H1 (cell line): ENCODE measurements at regions of chr4 and their contacts with region 1.

Region 1: DNA sequence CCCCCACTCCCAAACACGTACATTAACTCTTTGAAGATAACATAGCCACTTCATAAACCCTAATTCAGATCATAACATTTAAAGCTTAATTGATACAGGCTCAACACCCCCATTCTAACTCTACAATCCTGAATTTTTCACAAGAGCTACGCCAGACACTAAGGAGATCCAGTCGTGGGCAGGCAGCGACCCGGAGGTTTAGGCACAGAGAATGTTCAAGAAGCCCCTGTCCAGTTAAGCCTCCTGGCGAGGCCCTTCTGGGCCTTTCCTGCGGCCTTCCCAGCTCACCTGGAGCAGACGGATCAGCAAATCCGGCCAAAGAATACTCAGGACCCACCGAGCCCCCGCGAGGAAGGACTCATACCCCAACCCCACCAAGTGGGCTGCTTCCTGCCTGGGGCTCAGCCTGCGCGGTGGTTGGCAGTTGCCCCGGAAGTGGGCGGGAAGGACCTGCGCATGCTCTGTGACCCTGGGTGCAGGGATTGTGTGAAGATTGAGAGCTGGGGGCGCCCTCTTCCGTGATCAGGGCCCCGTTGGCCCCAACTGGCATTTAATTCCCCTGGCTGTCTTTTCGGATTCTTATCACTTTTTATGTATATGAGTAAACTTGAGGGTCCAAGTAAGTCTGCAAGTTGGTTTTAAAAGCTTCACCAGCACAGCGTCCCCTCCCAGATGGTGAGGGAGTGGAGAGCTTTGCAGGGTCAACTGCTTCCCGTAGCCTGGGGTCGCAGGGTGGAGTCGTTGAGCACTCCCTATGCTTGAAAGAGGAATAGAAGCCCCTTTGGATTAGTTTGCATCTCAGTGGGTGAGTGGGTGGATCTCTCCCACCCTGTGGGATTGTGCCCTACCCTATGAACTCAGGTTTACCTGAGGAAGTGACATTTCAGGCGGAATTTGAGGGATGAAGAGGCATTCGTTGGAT is at the start of gene TRIM61:
- DNase-seq: peak in 1 of 2 experiments; percentile 83
- H3K4me3 ChIP-seq: peak within 1 kb of the TSS in 2 of 4 experiments; percentile 28 to 72; a peak in 3 of 8 replicates
- H3K27ac ChIP-seq: no peak within 1 kb of the TSS
- H3K4me1 ChIP-seq: no peaks in the 10 kb centered on the region
- H3K27me3 ChIP-seq: no peaks in the 10 kb centered on the region
- CTCF ChIP-seq: no peak
- EP300 ChIP-seq: no peak
- POLR2A ChIP-seq: no peak
- RAD21 ChIP-seq: no peak
- total RNA-seq, gene TRIM61: 4.1 and 5.0 TPM in 2 replicates

Region 2: GRCh38 chr4:164949448-164950143 is 27.9 kb before region 1 on chr4:
- CTCF ChIA-PET with region 1: interaction called, 19 read pairs
- POLR2A ChIA-PET with region 1: no interaction called
- DNase-seq: peak in 1 of 2 experiments; percentile 80
- H3K4me3 ChIP-seq: no peak overlapping the region
- H3K27ac ChIP-seq: no peak overlapping the region; the same call in 1 of the 2 replicates
- H3K4me1 ChIP-seq: no peaks in the 10 kb centered on the region
- H3K27me3 ChIP-seq: no peaks in the 10 kb centered on the region
- CTCF ChIP-seq: peak; percentile 59 to 76 (median 62)
- EP300 ChIP-seq: no peak
- POLR2A ChIP-seq: no peak
- RAD21 ChIP-seq: peak; percentile 57 to 66

Region 3: GRCh38 chr4:164956766-164957643 is 20.5 kb before region 1 on chr4:
- CTCF ChIA-PET with region 1: interaction called, 10 read pairs
- POLR2A ChIA-PET with region 1: no interaction called
- DNase-seq: peak; percentile 54 to 69
- H3K4me3 ChIP-seq: peak overlapping the region; percentile 64 to 76 (median 72)
- H3K27ac ChIP-seq: no peak overlapping the region
- H3K4me1 ChIP-seq: peaks cover 0 to 2% (median 0%) of the 10 kb centered on the region in 4 experiments; a peak in 1 of 7 replicates
- H3K27me3 ChIP-seq: no peaks in the 10 kb centered on the region
- CTCF ChIP-seq: no peak
- EP300 ChIP-seq: no peak
- POLR2A ChIP-seq: peak in 1 of 2 experiments; percentile 88; a peak in 2 of 3 replicates
- RAD21 ChIP-seq: no peak

Region 4: DNA sequence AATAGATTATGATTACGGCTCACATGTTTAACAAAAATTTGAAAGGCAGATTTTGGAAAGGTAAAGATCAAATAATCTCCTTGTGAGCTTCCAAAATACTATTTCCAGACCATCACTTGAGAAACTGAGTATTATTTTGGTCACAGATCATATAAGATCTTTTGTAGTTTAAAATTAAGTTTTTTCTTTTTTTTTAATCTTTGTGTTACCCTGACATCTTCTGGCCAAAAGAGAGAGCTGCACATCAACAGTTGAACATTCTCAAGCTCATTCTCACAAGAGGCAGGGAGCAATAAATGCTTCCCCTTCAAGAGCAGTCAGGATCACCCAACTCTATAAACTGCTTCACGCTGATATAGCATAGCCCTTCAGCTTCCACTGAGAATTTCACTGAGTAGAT is 119.3 kb after region 1 on chr4:
- CTCF ChIA-PET with region 1: interaction called, 16 read pairs
- POLR2A ChIA-PET with region 1: no interaction called
- DNase-seq: no peak
- H3K4me3 ChIP-seq: no peak overlapping the region
- H3K27ac ChIP-seq: no peak overlapping the region
- H3K4me1 ChIP-seq: no peaks in the 10 kb centered on the region
- H3K27me3 ChIP-seq: no peaks in the 10 kb centered on the region
- CTCF ChIP-seq: peak in 2 of 3 experiments; percentile 40 to 50; a peak in 2 of 4 replicates
- EP300 ChIP-seq: no peak
- POLR2A ChIP-seq: no peak
- RAD21 ChIP-seq: peak; percentile 64 to 65